ENCODE measurements at regions of chr11 and their contacts with region 1.

Region 1: DNA sequence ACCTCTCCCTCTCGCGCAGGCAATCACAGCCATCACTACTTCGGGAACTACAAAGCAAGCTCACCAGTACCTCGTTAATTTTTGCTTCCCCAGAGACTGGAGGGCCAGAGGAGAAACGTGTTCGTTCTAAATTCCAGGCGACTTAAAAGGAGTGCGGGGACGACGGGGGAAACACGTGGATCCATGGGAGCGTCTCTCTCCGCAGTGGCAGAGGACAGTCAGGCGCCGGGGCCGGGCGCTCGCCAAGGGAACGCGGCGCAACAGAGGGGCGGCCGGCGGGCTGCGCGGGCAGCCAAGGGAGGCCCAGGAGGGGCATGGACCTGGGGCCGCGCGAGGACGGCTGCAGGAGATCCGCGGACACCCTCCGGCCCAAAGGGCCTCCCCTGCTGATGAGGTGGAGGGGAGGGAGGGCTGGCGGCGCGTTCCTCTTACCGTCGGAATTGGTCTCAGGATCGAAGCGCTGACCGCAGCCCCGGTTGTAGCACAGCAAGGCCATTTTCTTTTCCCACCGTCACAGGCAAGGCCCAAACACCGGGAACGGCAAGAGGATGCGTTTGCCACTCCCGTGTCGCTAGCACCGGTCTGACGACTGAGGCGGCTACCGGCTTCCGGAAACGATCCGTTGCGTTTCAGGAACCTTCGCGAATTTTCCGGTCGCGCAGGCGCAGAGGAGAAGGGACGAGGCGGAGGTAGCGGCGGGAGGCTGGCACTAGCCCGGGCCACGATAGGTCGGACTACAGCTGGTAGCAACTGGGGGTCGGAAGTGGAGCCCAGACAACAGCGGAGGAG is at the start of gene CHORDC1:
- DNase-seq: peak; percentile 95 to 96
- H3K4me3 ChIP-seq: peak within 1 kb of the TSS; percentile 79
- H3K4me3 Mint-ChIP-seq: peak within 1 kb of the TSS; percentile 98
- H3K27ac Mint-ChIP-seq: peak within 1 kb of the TSS; percentile 92
- H3K4me1 ChIP-seq: peaks cover 38% of the 10 kb centered on the region
- H3K4me1 Mint-ChIP-seq: peaks cover 33% of the 10 kb centered on the region
- H3K27me3 ChIP-seq: no peaks in the 10 kb centered on the region
- H3K27me3 Mint-ChIP-seq: no peaks in the 10 kb centered on the region
- CTCF ChIP-seq: no peak
- total RNA-seq, gene CHORDC1: 194 and 227 TPM in 2 replicates

Region 2: GRCh38 chr11:90234977-90235376 is 12.3 kb after region 1 on chr11:
- CTCF ChIA-PET with region 1: no interaction called
- POLR2A ChIA-PET with region 1: interaction called, 3 read pairs
- intact Hi-C with region 1: loop called (anchors 1 kb)
- DNase-seq: peak; percentile 24 to 59
- H3K4me3 ChIP-seq: no peak overlapping the region
- H3K4me3 Mint-ChIP-seq: peak overlapping the region; percentile 47
- H3K27ac Mint-ChIP-seq: peak overlapping the region; percentile 83
- H3K4me1 ChIP-seq: peaks cover 43% of the 10 kb centered on the region
- H3K4me1 Mint-ChIP-seq: peaks cover 45% of the 10 kb centered on the region
- H3K27me3 ChIP-seq: no peaks in the 10 kb centered on the region
- H3K27me3 Mint-ChIP-seq: no peaks in the 10 kb centered on the region
- CTCF ChIP-seq: no peak

Region 3: GRCh38 chr11:90447618-90448017 is 225.0 kb after region 1 on chr11:
- CTCF ChIA-PET with region 1: no interaction called
- POLR2A ChIA-PET with region 1: no interaction called
- intact Hi-C with region 1: loop called (anchors 5 kb)
- DNase-seq: no peak
- H3K4me3 ChIP-seq: no peak overlapping the region
- H3K4me3 Mint-ChIP-seq: no peak overlapping the region
- H3K27ac Mint-ChIP-seq: peak overlapping the region; percentile 64
- H3K4me1 ChIP-seq: peaks cover 52% of the 10 kb centered on the region
- H3K4me1 Mint-ChIP-seq: peaks cover 47% of the 10 kb centered on the region
- H3K27me3 ChIP-seq: no peaks in the 10 kb centered on the region
- H3K27me3 Mint-ChIP-seq: no peaks in the 10 kb centered on the region
- CTCF ChIP-seq: no peak

Measured in Caco-2 (cell line).